ENCODE measurements at regions of chr2 and their contacts with region 1.

Region 1: GRCh38 chr2:246489-247144 is 17.2 kb downstream of the SH3YL1 start:
- DNase-seq: peak; percentile 17
- H3K4me3 ChIP-seq: no peak overlapping the region
- H3K27me3 ChIP-seq: no peaks in the 10 kb centered on the region
- CTCF ChIP-seq: peak; percentile 67

Region 2: GRCh38 chr2:33620-34019 is 213.0 kb before region 1 on chr2:
- CTCF ChIA-PET with region 1: no interaction called
- POLR2A ChIA-PET with region 1: no interaction called
- DNase-seq: no peak
- H3K4me3 ChIP-seq: no peak overlapping the region
- H3K27me3 ChIP-seq: no peaks in the 10 kb centered on the region
- CTCF ChIP-seq: no peak

Region 3: GRCh38 chr2:262996-263738 is 16.6 kb after region 1 on chr2:
- CTCF ChIA-PET with region 1: interaction called, 10 read pairs
- POLR2A ChIA-PET with region 1: no interaction called
- DNase-seq: no peak
- H3K4me3 ChIP-seq: peak overlapping the region; percentile 60
- H3K27me3 ChIP-seq: no peaks in the 10 kb centered on the region
- CTCF ChIP-seq: no peak

Region 4: DNA sequence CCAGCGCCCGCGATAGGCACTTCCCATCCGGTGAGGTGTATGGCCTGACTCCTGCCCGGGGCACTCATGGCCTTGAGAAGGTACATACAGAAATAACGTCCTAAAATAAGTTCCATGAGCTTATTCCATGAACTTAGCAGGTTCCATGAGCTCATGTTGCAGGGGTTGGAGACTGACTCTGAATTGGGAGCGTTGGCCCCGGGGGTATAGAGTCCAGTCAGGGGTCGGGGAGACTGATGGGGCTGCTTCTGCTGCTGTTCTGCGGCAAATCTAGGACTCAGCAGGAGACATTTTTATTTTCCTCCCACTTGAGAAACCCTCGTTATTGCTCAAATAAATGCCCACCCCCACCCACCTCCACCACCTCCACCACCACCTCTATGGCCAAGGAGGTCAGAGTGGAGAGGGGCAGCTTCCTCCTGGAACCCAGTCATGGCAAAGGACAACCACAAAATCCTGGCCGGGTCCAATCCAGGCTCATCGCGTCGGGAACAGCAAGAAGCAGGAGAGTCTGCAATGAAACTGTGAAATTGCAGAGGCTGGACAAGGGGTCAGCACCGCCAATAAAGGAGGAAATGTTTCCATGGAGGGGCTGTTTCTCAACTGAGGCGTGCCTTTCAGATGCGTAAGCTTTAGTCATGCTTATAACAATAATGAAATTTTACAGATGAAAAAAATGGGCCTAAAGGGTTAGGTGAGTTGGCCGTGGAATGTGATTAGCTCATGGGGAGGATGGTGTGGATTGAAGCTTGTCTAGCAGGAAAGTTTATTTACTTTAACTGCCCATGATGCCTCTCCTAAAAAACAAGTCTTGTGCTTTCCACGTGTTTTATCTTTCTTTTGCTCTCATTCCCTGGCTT is 177.9 kb after region 1 on chr2:
- CTCF ChIA-PET with region 1: no interaction called
- POLR2A ChIA-PET with region 1: no interaction called
- DNase-seq: no peak
- H3K4me3 ChIP-seq: no peak overlapping the region
- H3K27me3 ChIP-seq: no peaks in the 10 kb centered on the region
- CTCF ChIP-seq: no peak